Activated CD4-positive, alpha-beta memory T cell treated with anti-CD3 and anti-CD28 coated beads for 36 hours (primary cell): ENCODE measurements at regions of chr9 and their contacts with region 1.

Region 1: DNA sequence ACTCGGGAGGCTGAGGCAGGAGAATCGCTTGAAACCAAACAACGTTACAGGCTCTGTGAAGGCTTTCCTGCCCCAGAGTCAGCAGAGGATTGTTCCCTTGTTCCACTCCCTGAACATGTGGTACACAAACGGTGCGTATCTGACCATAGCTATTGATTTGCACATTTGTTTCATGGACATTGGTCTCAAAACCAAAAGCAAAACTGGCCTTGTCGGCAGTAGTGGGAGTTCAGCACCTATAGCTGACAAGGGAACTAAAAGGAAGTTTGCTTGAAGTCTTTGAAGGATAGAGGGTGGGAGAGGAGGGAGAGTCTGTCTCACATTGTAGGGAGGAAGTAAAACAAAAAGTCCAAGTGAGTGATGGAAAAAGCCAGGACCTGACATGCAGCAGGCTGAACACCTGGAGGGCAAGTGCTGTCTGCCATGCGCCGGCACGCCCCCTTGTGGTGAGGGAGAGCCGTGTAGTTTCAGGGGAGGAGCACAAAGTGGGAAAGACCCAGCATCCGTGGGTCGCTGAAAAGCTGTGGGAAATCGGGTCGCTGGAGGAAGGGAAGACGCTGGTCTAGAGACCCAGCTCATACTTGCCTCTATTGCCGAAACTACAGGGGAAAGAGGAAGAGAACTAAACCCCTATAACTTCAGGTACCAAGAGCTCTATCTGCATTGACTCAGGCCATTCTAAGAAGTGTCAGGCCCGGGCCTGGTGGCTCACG is 58.0 kb downstream of the RAD23B start:
- DNase-seq: peak; percentile 86
- H3K4me3 Mint-ChIP-seq: no peak overlapping the region
- H3K27ac Mint-ChIP-seq: no peak overlapping the region
- H3K4me1 Mint-ChIP-seq: peaks cover 9% of the 10 kb centered on the region
- H3K27me3 Mint-ChIP-seq: peaks cover 2% of the 10 kb centered on the region

Region 2: GRCh38 chr9:107137495-107138202 is 203.4 kb before region 1 on chr9:
- CTCF ChIA-PET with region 1: interaction called, 43 read pairs
- POLR2A ChIA-PET with region 1: no interaction called
- intact Hi-C with region 1: loop called (anchors 1 kb)
- DNase-seq: no peak
- H3K4me3 Mint-ChIP-seq: no peak overlapping the region
- H3K27ac Mint-ChIP-seq: no peak overlapping the region
- H3K4me1 Mint-ChIP-seq: no peaks in the 10 kb centered on the region
- H3K27me3 Mint-ChIP-seq: peaks cover 11% of the 10 kb centered on the region

Region 3: GRCh38 chr9:107163370-107163769 is 177.7 kb before region 1 on chr9:
- CTCF ChIA-PET with region 1: interaction called, 12 read pairs
- POLR2A ChIA-PET with region 1: no interaction called
- intact Hi-C with region 1: no loop called
- DNase-seq: no peak
- H3K4me3 Mint-ChIP-seq: no peak overlapping the region
- H3K27ac Mint-ChIP-seq: no peak overlapping the region
- H3K4me1 Mint-ChIP-seq: no peaks in the 10 kb centered on the region
- H3K27me3 Mint-ChIP-seq: peaks cover 2% of the 10 kb centered on the region

Region 4: GRCh38 chr9:107222020-107222522 is 119.0 kb before region 1 on chr9:
- CTCF ChIA-PET with region 1: interaction called, 10 read pairs
- POLR2A ChIA-PET with region 1: no interaction called
- intact Hi-C with region 1: no loop called
- DNase-seq: no peak
- H3K4me3 Mint-ChIP-seq: no peak overlapping the region
- H3K27ac Mint-ChIP-seq: no peak overlapping the region
- H3K4me1 Mint-ChIP-seq: no peaks in the 10 kb centered on the region
- H3K27me3 Mint-ChIP-seq: peaks cover 9% of the 10 kb centered on the region

Region 5: GRCh38 chr9:107282753-107283625 is 58.1 kb before region 1 on chr9 and contains the start of gene RAD23B:
- CTCF ChIA-PET with region 1: interaction called, 17 read pairs
- POLR2A ChIA-PET with region 1: interaction called, 4 read pairs
- intact Hi-C with region 1: loop called (anchors 2 kb)
- DNase-seq: peak; percentile 99
- H3K4me3 Mint-ChIP-seq: peak within 1 kb of the TSS; percentile 96
- H3K27ac Mint-ChIP-seq: peak within 1 kb of the TSS; percentile 95
- H3K4me1 Mint-ChIP-seq: peaks cover 41% of the 10 kb centered on the region
- H3K27me3 Mint-ChIP-seq: no peaks in the 10 kb centered on the region
- total RNA-seq, gene RAD23B: 111 TPM

Region 6: DNA sequence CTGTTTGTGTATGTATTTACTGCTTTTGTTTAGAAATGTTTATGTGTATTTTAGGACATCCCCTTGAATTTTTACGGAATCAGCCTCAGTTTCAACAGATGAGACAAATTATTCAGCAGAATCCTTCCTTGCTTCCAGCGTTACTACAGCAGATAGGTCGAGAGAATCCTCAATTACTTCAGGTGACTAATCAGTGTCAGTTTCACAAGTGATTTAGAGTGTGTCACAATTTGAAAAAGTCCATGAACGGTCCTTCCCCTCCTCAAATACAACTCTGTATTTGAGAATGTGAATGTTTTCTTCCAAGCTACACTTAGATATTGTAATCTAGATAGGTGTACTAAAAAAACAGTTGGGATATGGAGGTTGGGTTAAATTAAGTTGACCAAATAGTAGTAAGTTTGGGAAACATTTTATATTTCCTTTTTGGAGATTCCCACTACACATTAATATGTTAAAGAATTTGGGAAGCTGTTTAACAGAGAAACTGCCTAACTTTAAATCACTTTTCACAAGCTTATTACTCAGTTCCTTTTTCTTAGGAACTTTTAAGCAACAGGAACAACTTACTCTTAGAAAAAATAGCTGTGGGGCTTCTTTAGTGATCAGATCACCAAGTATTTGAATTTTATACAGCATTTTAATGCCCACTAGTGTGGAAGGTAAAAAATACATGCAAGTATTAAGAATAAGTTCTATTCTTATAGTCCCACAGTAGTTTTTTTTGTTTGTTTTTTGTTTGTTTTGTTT is 17.1 kb before region 1 on chr9:
- CTCF ChIA-PET with region 1: interaction called, 19 read pairs
- POLR2A ChIA-PET with region 1: no interaction called
- intact Hi-C with region 1: no loop called
- DNase-seq: no peak
- H3K4me3 Mint-ChIP-seq: no peak overlapping the region
- H3K27ac Mint-ChIP-seq: no peak overlapping the region
- H3K4me1 Mint-ChIP-seq: peaks cover 18% of the 10 kb centered on the region
- H3K27me3 Mint-ChIP-seq: no peaks in the 10 kb centered on the region

Region 7: GRCh38 chr9:107389617-107390071 is 48.6 kb after region 1 on chr9:
- CTCF ChIA-PET with region 1: no interaction called
- POLR2A ChIA-PET with region 1: no interaction called
- intact Hi-C with region 1: no loop called
- DNase-seq: no peak
- H3K4me3 Mint-ChIP-seq: no peak overlapping the region
- H3K27ac Mint-ChIP-seq: no peak overlapping the region
- H3K4me1 Mint-ChIP-seq: no peaks in the 10 kb centered on the region
- H3K27me3 Mint-ChIP-seq: peaks cover 2% of the 10 kb centered on the region